Natural killer cell (primary cell): ENCODE measurements at regions of chr13 and their contacts with region 1.

Region 1: GRCh38 chr13:59680429-59681024 is 483.2 kb downstream of the DIAPH3 start:
- DNase-seq: peak in 1 of 2 donors; percentile 47
- ATAC-seq: no peak
- H3K4me3 ChIP-seq: no peak overlapping the region
- H3K4me3 Mint-ChIP-seq: no peak overlapping the region
- H3K27ac ChIP-seq: no peak overlapping the region
- H3K27ac Mint-ChIP-seq: no peak overlapping the region
- H3K4me1 ChIP-seq: no peaks in the 10 kb centered on the region
- H3K4me1 Mint-ChIP-seq: peaks cover 0 to 8% of the 10 kb centered on the region in 2 donors
- H3K27me3 ChIP-seq: no peaks in the 10 kb centered on the region
- H3K27me3 Mint-ChIP-seq: no peaks in the 10 kb centered on the region
- CTCF ChIP-seq: peak; percentile 62

Region 2: GRCh38 chr13:59906413-59907049 is 226.0 kb after region 1 on chr13:
- intact Hi-C with region 1: loop called (anchors 10 kb)
- DNase-seq: peak in 1 of 2 donors; percentile 19
- ATAC-seq: no peak
- H3K4me3 ChIP-seq: no peak overlapping the region
- H3K4me3 Mint-ChIP-seq: no peak overlapping the region
- H3K27ac ChIP-seq: no peak overlapping the region
- H3K27ac Mint-ChIP-seq: no peak overlapping the region
- H3K4me1 ChIP-seq: no peaks in the 10 kb centered on the region
- H3K4me1 Mint-ChIP-seq: peaks cover under 1 to 3% of the 10 kb centered on the region in 2 donors
- H3K27me3 ChIP-seq: no peaks in the 10 kb centered on the region
- H3K27me3 Mint-ChIP-seq: no peaks in the 10 kb centered on the region
- CTCF ChIP-seq: peak; percentile 13

Region 3: GRCh38 chr13:60431108-60431700 is 750.7 kb after region 1 on chr13:
- intact Hi-C with region 1: loop called (anchors 2 kb)
- DNase-seq: peak in 1 of 2 donors; percentile 78
- ATAC-seq: peak; percentile 82 to 89 (median 84)
- H3K4me3 ChIP-seq: no peak overlapping the region
- H3K4me3 Mint-ChIP-seq: no peak overlapping the region
- H3K27ac ChIP-seq: no peak overlapping the region
- H3K27ac Mint-ChIP-seq: no peak overlapping the region
- H3K4me1 ChIP-seq: peaks cover 3% of the 10 kb centered on the region
- H3K4me1 Mint-ChIP-seq: peaks cover 32 to 34% of the 10 kb centered on the region in 2 donors
- H3K27me3 ChIP-seq: no peaks in the 10 kb centered on the region
- H3K27me3 Mint-ChIP-seq: no peaks in the 10 kb centered on the region
- CTCF ChIP-seq: peak; percentile 97